B cell (primary cell): ENCODE measurements at regions of chr12 and their contacts with region 1.

Region 1: GRCh38 chr12:92170050-92170449 is 24.4 kb upstream of the BTG1 start:
- DNase-seq: no peak
- ATAC-seq: no peak
- H3K4me3 ChIP-seq: no peak overlapping the region
- H3K4me3 Mint-ChIP-seq: peak overlapping the region; percentile 29
- H3K27ac ChIP-seq: peak overlapping the region; percentile 91 to 95
- H3K27ac Mint-ChIP-seq: peak overlapping the region; percentile 75
- H3K4me1 ChIP-seq: peaks cover 46 to 63% of the 10 kb centered on the region in 2 donors
- H3K4me1 Mint-ChIP-seq: peaks cover 68% of the 10 kb centered on the region
- H3K27me3 ChIP-seq: no peaks in the 10 kb centered on the region
- H3K27me3 Mint-ChIP-seq: no peaks in the 10 kb centered on the region
- CTCF ChIP-seq: no peak

Region 2: DNA sequence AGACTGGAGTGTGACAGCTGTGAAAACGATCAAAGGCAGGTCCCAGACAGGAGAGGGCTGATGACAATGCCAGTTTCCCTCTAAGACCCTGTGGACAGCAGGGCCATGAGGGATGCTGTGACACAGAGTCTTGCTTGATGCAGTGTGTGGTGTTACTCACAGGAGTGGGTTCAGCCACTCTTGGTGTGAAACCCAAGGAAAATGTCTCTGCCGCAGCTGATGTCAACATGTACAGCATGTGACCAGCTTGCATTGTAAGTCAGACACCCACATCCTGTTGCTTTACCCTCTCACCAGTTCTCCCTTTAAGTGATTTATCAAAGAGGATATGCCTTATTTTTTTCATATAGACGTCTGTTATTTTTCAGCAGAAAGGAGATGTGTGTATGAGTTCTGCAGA is 293.0 kb before region 1 on chr12:
- CTCF ChIA-PET with region 1: no interaction called
- POLR2A ChIA-PET with region 1: no interaction called
- intact Hi-C with region 1: loop called (anchors 1 kb)
- DNase-seq: peak; percentile 84
- ATAC-seq: peak; percentile 90
- H3K4me3 ChIP-seq: peak overlapping the region in 1 of 5 experiments; percentile 10
- H3K4me3 Mint-ChIP-seq: peak overlapping the region; percentile 74
- H3K27ac ChIP-seq: peak overlapping the region; percentile 48 to 76
- H3K27ac Mint-ChIP-seq: peak overlapping the region; percentile 93
- H3K4me1 ChIP-seq: peaks cover 19 to 22% of the 10 kb centered on the region in 2 donors
- H3K4me1 Mint-ChIP-seq: peaks cover 27% of the 10 kb centered on the region
- H3K27me3 ChIP-seq: no peaks in the 10 kb centered on the region
- H3K27me3 Mint-ChIP-seq: no peaks in the 10 kb centered on the region
- CTCF ChIP-seq: no peak

Region 3: GRCh38 chr12:92185052-92185451 is 15.0 kb after region 1 on chr12:
- CTCF ChIA-PET with region 1: no interaction called
- POLR2A ChIA-PET with region 1: interaction called, 5 read pairs
- intact Hi-C with region 1: loop called (anchors 1 kb)
- DNase-seq: peak; percentile 43
- ATAC-seq: peak; percentile 37
- H3K4me3 ChIP-seq: peak overlapping the region in 1 of 5 experiments; percentile 31
- H3K4me3 Mint-ChIP-seq: peak overlapping the region; percentile 62
- H3K27ac ChIP-seq: peak overlapping the region; percentile 86 to 97
- H3K27ac Mint-ChIP-seq: peak overlapping the region; percentile 82
- H3K4me1 ChIP-seq: peaks cover 32 to 42% of the 10 kb centered on the region in 2 donors
- H3K4me1 Mint-ChIP-seq: peaks cover 52% of the 10 kb centered on the region
- H3K27me3 ChIP-seq: no peaks in the 10 kb centered on the region
- H3K27me3 Mint-ChIP-seq: no peaks in the 10 kb centered on the region
- CTCF ChIP-seq: no peak

Region 4: GRCh38 chr12:92363295-92364146 is 193.5 kb after region 1 on chr12:
- CTCF ChIA-PET with region 1: interaction called, 16 read pairs
- POLR2A ChIA-PET with region 1: interaction called, 23 read pairs
- intact Hi-C with region 1: loop called (anchors 1 kb)
- DNase-seq: peak; percentile 88
- ATAC-seq: peak; percentile 71
- H3K4me3 ChIP-seq: peak overlapping the region; percentile 12 to 57 (median 54)
- H3K4me3 Mint-ChIP-seq: peak overlapping the region; percentile 92
- H3K27ac ChIP-seq: peak overlapping the region; percentile 95 to 96
- H3K27ac Mint-ChIP-seq: peak overlapping the region; percentile 89
- H3K4me1 ChIP-seq: peaks cover 55 to 57% of the 10 kb centered on the region in 2 donors
- H3K4me1 Mint-ChIP-seq: peaks cover 73% of the 10 kb centered on the region
- H3K27me3 ChIP-seq: no peaks in the 10 kb centered on the region
- H3K27me3 Mint-ChIP-seq: no peaks in the 10 kb centered on the region
- CTCF ChIP-seq: no peak

Region 5: DNA sequence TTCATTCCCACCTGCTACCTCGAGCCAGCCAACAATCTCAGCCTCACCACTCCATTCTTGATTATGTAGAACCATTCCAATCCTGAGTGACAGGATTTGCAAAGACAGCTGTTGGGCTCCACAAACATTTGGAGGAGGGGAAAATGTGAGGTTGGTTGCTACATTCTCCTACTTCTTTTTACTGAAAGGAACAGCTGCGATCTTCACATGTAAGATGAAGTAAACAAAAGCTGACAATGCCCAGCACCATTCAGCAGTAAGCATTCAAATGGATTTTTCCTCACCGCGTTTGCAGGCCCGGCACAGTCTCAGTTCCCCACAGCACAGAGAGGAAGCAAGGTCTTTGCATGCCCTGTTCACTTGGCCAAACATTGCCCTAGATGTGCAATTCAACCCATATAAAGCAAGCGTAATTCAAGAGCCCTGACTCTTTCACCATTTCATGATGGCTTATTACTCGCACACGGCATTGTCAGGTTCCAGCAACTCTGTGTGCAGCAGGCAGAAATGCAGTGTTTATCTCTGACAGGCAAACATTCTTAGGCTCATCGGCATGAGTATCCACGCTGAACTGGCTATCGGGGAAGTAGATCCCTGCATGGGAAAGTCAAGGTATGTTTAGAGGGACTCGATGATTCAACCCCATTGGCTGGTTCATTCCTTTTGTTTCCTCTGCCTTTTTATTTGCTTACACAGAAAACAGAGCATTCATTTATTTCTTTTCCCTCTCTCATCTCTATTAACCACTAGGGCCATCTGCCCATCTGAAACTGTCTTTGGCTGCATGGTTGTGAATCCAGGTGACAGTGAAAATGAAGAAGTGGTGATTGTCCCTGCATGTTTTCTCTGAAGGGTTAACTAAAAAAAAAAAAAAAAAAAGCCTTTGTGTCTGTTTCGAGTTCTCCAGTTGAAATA is 296.6 kb after region 1 on chr12:
- CTCF ChIA-PET with region 1: interaction called, 3 read pairs
- POLR2A ChIA-PET with region 1: interaction called, 6 read pairs
- intact Hi-C with region 1: loop called (anchors 1 kb)
- DNase-seq: peak; percentile 87
- ATAC-seq: peak; percentile 76
- H3K4me3 ChIP-seq: peak overlapping the region; percentile 61 to 93 (median 68)
- H3K4me3 Mint-ChIP-seq: peak overlapping the region; percentile 94
- H3K27ac ChIP-seq: peak overlapping the region; percentile 85 to 93
- H3K27ac Mint-ChIP-seq: peak overlapping the region; percentile 95
- H3K4me1 ChIP-seq: peaks cover 80 to 83% of the 10 kb centered on the region in 2 donors
- H3K4me1 Mint-ChIP-seq: peaks cover 81% of the 10 kb centered on the region
- H3K27me3 ChIP-seq: no peaks in the 10 kb centered on the region
- H3K27me3 Mint-ChIP-seq: no peaks in the 10 kb centered on the region
- CTCF ChIP-seq: no peak